ENCODE measurements at regions of chr1 and their contacts with region 1.

Region 1: DNA sequence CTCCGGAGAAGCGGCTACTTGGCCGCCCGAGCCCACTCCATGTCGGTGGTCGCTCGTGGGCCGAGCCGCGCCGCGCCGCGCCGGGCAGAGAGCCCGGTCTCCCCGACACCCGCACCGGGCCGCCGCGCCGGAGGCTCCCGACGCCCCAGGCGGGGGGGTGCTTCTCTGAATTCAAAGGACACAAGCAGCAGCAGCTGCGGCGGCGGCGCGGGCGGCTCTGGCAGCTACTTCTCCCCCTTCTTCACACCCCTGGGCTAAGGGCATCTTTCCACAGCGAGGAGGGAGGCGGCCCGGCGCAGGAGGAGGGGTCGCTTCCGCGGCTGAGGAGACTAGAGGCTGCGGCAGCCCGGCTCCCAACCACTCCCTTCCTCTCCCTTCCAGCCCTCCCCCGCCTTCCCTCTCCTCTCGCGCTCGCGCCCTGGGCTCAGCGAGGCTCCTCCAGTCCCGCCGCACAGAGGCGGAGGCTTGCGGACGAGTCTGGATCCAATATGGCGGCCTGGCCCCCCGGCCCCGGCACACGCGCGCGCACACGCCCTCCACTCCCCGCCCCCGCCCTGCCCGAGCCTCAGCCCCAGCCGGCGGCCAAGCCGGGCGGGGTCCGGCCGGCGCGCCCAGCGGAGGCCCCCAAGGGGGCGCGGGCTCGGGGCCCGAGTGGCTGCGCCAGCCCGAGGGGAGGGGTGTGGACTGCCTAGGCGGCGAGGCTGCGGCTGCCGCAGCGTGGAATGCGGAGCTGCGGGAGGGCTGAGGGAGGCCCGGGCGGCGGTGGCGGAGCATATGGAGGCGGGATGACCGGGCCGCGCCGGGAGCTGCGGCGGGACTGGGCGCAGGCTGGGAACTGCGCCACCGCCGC is at the start of gene CDC42BPA:
- DNase-seq: peak; percentile 89 to 93 (median 92)
- ATAC-seq: peak; percentile 84 to 95 (median 90)
- H3K4me3 ChIP-seq: peak within 1 kb of the TSS; percentile 76 to 97 (median 89)
- H3K27ac ChIP-seq: peak within 1 kb of the TSS; percentile 92 to 98 (median 96)
- H3K4me1 ChIP-seq: peaks cover 0 to 18% (median 7%) of the 10 kb centered on the region in 12 donors
- H3K27me3 ChIP-seq: peaks cover 0 to 8% (median 0%) of the 10 kb centered on the region in 9 donors
- CTCF ChIP-seq: no peak
- POLR2A ChIP-seq: peak in 1 of 2 donors; percentile 32
- total RNA-seq, gene CDC42BPA: 26.3 to 33.8 (median 30.8) TPM

Region 2: GRCh38 chr1:226912587-226913176 is 405.5 kb before region 1 on chr1:
- intact Hi-C with region 1: loop called in 1 of 10 experiments (anchors 10 kb)
- DNase-seq: peak; percentile 54 to 79 (median 69)
- ATAC-seq: peak; percentile 65 to 89 (median 85)
- H3K4me3 ChIP-seq: no peak overlapping the region
- H3K27ac ChIP-seq: peak overlapping the region in 4 of 12 donors; percentile 9 to 48 (median 26)
- H3K4me1 ChIP-seq: peaks cover 0 to 13% (median 1%) of the 10 kb centered on the region in 12 donors
- H3K27me3 ChIP-seq: no peaks in the 10 kb centered on the region
- CTCF ChIP-seq: peak; percentile 42 to 78 (median 66)
- POLR2A ChIP-seq: no peak

Region 3: DNA sequence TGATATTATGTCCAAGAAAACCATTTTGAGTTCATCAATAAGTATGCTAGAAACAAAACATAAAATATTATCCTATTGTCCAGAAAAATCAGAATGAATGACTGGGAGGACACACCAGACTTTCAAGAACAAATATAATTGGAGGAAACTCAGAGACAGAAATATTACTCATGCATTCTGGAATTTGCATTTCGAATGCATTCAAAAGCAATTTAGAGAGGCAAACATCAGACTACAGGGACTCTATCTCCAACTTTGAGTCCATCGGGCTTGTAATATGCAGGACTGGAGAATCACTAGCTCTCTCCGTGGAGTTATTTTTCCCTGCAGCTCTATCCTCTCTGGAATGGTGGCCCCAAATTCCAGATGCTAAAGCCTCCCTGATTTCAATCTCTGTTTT is 161.7 kb before region 1 on chr1:
- intact Hi-C with region 1: loop called in 2 of 10 experiments (anchors 10 kb)
- DNase-seq: no peak
- ATAC-seq: no peak
- H3K4me3 ChIP-seq: no peak overlapping the region
- H3K27ac ChIP-seq: no peak overlapping the region
- H3K4me1 ChIP-seq: peaks cover 0 to 14% (median 0%) of the 10 kb centered on the region in 12 donors
- H3K27me3 ChIP-seq: no peaks in the 10 kb centered on the region
- CTCF ChIP-seq: no peak
- POLR2A ChIP-seq: no peak

Region 4: DNA sequence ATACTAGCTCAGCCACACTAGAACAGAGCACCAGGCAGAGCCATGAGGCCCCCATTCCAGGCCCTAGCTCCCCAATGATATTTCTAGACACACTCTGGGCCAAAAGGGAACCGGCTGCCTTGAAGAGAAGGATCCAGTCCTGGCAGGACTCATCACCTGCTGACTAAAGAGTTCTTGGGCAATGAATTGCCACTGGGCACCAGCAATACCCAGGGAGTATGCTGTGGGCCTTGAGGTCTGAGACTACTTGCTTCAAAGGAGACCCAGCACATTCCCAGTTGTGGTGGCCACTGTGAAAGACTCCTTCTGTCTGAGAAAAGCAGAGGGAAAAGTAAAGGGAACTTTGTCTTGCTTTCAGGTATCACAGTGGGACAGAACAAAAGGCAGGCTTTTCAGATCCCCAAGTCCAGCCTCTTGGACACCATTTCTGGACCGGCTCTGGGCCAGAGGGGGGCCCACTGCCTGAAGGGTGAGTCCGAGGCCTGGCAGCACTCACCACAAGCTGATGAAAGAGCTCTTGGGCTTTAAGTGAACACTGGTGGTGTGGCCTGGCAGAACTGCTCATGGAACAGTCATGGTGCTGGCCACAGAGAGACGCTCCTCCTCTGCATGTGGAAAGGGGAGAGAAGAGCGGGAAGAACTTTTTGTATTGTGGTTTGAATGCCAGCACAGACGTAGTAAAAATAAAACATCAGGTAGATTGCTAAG is 72.5 kb before region 1 on chr1:
- intact Hi-C with region 1: loop called in 4 of 10 experiments (anchors 5 to 10 kb)
- DNase-seq: peak in 4 of 5 donors; percentile 32 to 80 (median 66)
- ATAC-seq: peak; percentile 77 to 94 (median 86)
- H3K4me3 ChIP-seq: no peak overlapping the region
- H3K27ac ChIP-seq: peak overlapping the region in 7 of 12 donors; percentile 17 to 46 (median 37)
- H3K4me1 ChIP-seq: peaks cover 0 to 42% (median 17%) of the 10 kb centered on the region in 12 donors
- H3K27me3 ChIP-seq: no peaks in the 10 kb centered on the region
- CTCF ChIP-seq: peak in 1 of 12 donors; percentile 14
- POLR2A ChIP-seq: no peak

Region 5: GRCh38 chr1:227273557-227273956 is 44.7 kb before region 1 on chr1:
- intact Hi-C with region 1: no loop called
- DNase-seq: no peak
- ATAC-seq: no peak
- H3K4me3 ChIP-seq: no peak overlapping the region
- H3K27ac ChIP-seq: no peak overlapping the region
- H3K4me1 ChIP-seq: peaks cover 0 to 23% (median 9%) of the 10 kb centered on the region in 12 donors
- H3K27me3 ChIP-seq: no peaks in the 10 kb centered on the region
- CTCF ChIP-seq: no peak
- POLR2A ChIP-seq: no peak

Region 6: DNA sequence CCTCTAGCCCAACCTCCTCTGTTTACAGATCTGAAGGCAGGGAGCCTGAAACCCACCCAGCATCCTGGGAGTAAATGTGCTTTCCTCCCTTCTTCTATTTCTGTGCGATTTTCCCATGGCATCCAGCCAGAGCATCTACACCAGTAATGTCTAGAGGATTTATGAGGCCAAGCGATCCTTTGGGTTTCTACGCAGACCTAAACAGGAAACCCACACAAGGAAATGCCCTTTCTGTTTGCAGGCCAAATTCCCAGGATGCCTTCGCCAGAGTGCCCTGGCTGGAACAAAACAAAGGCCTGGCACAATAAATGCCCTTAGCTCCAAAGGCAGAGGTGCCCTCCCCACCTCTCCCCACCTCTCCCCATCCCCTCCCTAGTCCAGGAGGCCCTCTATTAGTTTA is 110.6 kb after region 1 on chr1:
- intact Hi-C with region 1: loop called in 5 of 10 experiments (anchors 2 to 10 kb)
- DNase-seq: peak; percentile 38 to 70 (median 56)
- ATAC-seq: peak; percentile 40 to 60 (median 48)
- H3K4me3 ChIP-seq: no peak overlapping the region
- H3K27ac ChIP-seq: peak overlapping the region in 11 of 12 donors; percentile 27 to 76 (median 62)
- H3K4me1 ChIP-seq: peaks cover 0 to 52% (median 28%) of the 10 kb centered on the region in 12 donors
- H3K27me3 ChIP-seq: no peaks in the 10 kb centered on the region
- CTCF ChIP-seq: no peak
- POLR2A ChIP-seq: no peak